Activated CD4-positive, alpha-beta T cell treated with anti-CD3 and anti-CD28 coated beads for 36 hours (primary cell): ENCODE measurements at regions of chr10 and their contacts with region 1.

Region 1: DNA sequence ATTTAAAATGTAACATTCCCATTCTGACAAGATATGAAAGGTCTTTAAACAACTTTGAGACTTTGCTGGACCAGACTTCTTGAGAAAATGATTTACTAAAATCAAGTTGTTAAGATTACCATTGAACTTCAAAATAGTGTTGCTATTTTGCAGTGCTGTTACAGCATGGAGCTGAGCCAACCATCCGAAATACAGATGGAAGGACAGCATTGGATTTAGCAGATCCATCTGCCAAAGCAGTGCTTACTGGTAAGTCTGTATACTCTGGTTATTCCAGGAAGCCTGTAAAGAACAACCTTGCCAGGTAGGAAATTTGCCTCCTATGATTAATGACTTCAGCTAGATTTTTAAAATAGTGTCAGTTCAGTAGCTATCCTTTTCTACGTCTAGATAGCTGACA is 18.8 kb downstream of the TNKS2 start:
- DNase-seq: no peak
- ATAC-seq: no peak
- H3K4me3 Mint-ChIP-seq: no peak overlapping the region
- H3K27ac Mint-ChIP-seq: no peak overlapping the region
- H3K4me1 Mint-ChIP-seq: peaks cover 19% of the 10 kb centered on the region
- H3K27me3 Mint-ChIP-seq: no peaks in the 10 kb centered on the region

Region 2: GRCh38 chr10:91856637-91857036 is 39.7 kb after region 1 on chr10:
- CTCF ChIA-PET with region 1: no interaction called
- POLR2A ChIA-PET with region 1: no interaction called
- intact Hi-C with region 1: loop called in 1 of 2 experiments (anchors 5 kb)
- DNase-seq: no peak
- ATAC-seq: no peak
- H3K4me3 Mint-ChIP-seq: no peak overlapping the region
- H3K27ac Mint-ChIP-seq: no peak overlapping the region
- H3K4me1 Mint-ChIP-seq: no peaks in the 10 kb centered on the region
- H3K27me3 Mint-ChIP-seq: no peaks in the 10 kb centered on the region